Psoas muscle (tissue), 8 donors: ENCODE measurements at regions of chr6 and their contacts with region 1.

Region 1: GRCh38 chr6:31197559-31198305 is 27.2 kb upstream of the POU5F1 start:
- DNase-seq: peak; percentile 89 to 94
- ATAC-seq: peak; percentile 85 to 89 (median 88)
- H3K4me3 ChIP-seq: peak overlapping the region; percentile 80
- H3K27ac ChIP-seq: peak overlapping the region; percentile 96
- H3K4me1 ChIP-seq: peaks cover 5% of the 10 kb centered on the region
- H3K27me3 ChIP-seq: no peaks in the 10 kb centered on the region
- CTCF ChIP-seq: no peak

Region 2: GRCh38 chr6:31037682-31038081 is 160.1 kb before region 1 on chr6:
- intact Hi-C with region 1: no loop called
- DNase-seq: no peak
- ATAC-seq: peak; percentile 46 to 85 (median 78)
- H3K4me3 ChIP-seq: no peak overlapping the region
- H3K27ac ChIP-seq: peak overlapping the region; percentile 18
- H3K4me1 ChIP-seq: no peaks in the 10 kb centered on the region
- H3K27me3 ChIP-seq: no peaks in the 10 kb centered on the region
- CTCF ChIP-seq: no peak

Region 3: GRCh38 chr6:31094389-31094881 is 103.3 kb before region 1 on chr6:
- intact Hi-C with region 1: no loop called
- DNase-seq: no peak
- ATAC-seq: peak in 3 of 4 donors; percentile 8 to 44 (median 37)
- H3K4me3 ChIP-seq: no peak overlapping the region
- H3K27ac ChIP-seq: no peak overlapping the region
- H3K4me1 ChIP-seq: peaks cover 9% of the 10 kb centered on the region
- H3K27me3 ChIP-seq: no peaks in the 10 kb centered on the region
- CTCF ChIP-seq: no peak

Region 4: GRCh38 chr6:31366693-31367470 is 169.2 kb after region 1 on chr6:
- intact Hi-C with region 1: loop called (anchors 2 kb)
- DNase-seq: peak; percentile 86 to 92
- ATAC-seq: peak; percentile 98 to 100 (median 99)
- H3K4me3 ChIP-seq: peak overlapping the region; percentile 36
- H3K27ac ChIP-seq: no peak overlapping the region
- H3K4me1 ChIP-seq: no peaks in the 10 kb centered on the region
- H3K27me3 ChIP-seq: peaks cover 0 to 16% (median 2%) of the 10 kb centered on the region in 3 donors
- CTCF ChIP-seq: peak; percentile 96